ENCODE measurements at regions of chr11 and their contacts with region 1.

Region 1: GRCh38 chr11:16001899-16002426 is 354.4 kb downstream of the SOX6 start:
- DNase-seq: peak; percentile 75
- H3K4me3 Mint-ChIP-seq: peak overlapping the region; percentile 43
- H3K27ac Mint-ChIP-seq: peak overlapping the region; percentile 94
- H3K4me1 Mint-ChIP-seq: peaks cover 38% of the 10 kb centered on the region
- H3K27me3 Mint-ChIP-seq: no peaks in the 10 kb centered on the region
- CTCF ChIP-seq: no peak

Region 2: DNA sequence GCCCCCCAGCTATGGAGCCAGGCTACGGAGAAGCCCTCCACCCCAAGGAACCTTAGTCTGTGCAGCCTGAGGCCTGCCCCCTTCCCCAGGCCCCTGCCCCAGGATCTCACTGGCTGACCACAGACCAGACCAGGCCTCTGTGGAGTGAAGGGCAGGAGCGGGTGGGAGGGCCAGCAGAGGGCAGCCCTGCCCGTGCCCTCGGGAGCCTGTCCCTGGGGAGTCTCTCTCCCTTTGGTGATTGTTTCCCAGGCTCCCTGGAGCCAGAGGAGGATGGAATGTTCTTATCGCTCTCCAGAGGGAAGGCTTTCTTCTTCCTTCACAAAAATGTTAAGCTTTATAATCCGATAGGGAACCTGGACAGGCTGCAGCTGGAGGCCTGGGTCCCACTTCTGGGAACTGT is 100.9 kb before region 1 on chr11:
- CTCF ChIA-PET with region 1: no interaction called
- intact Hi-C with region 1: loop called (anchors 5 kb)
- DNase-seq: peak; percentile 57
- H3K4me3 Mint-ChIP-seq: no peak overlapping the region
- H3K27ac Mint-ChIP-seq: no peak overlapping the region
- H3K4me1 Mint-ChIP-seq: peaks cover 22% of the 10 kb centered on the region
- H3K27me3 Mint-ChIP-seq: no peaks in the 10 kb centered on the region
- CTCF ChIP-seq: peak; percentile 46

Region 3: DNA sequence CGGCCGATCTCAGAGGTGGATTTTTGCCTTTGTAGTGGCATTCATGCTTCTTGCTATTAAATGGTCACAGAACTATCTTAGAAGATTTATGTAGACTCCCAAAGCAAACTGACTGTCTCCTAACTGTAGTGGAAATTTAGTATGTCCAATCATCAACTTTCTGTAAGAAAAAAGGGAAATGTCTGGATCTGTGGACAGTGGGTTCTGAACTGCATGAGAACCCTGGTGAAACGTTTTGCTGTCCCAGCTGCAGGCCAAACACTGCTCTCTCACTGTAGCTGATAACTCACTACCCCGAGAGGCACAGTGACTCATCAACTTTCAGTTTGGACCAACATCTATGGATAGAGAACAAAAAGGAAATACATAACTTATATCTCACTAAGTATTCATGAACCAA is 32.7 kb before region 1 on chr11:
- CTCF ChIA-PET with region 1: interaction called, 4 read pairs
- intact Hi-C with region 1: loop called (anchors 2 kb)
- DNase-seq: peak; percentile 56
- H3K4me3 Mint-ChIP-seq: peak overlapping the region; percentile 58
- H3K27ac Mint-ChIP-seq: peak overlapping the region; percentile 93
- H3K4me1 Mint-ChIP-seq: peaks cover 72% of the 10 kb centered on the region
- H3K27me3 Mint-ChIP-seq: no peaks in the 10 kb centered on the region
- CTCF ChIP-seq: no peak

Region 4: GRCh38 chr11:15981292-15981691 is 20.7 kb before region 1 on chr11:
- CTCF ChIA-PET with region 1: no interaction called
- intact Hi-C with region 1: no loop called
- DNase-seq: no peak
- H3K4me3 Mint-ChIP-seq: no peak overlapping the region
- H3K27ac Mint-ChIP-seq: no peak overlapping the region
- H3K4me1 Mint-ChIP-seq: no peaks in the 10 kb centered on the region
- H3K27me3 Mint-ChIP-seq: no peaks in the 10 kb centered on the region
- CTCF ChIP-seq: no peak

Region 5: GRCh38 chr11:16126362-16126761 is 124.4 kb after region 1 on chr11:
- CTCF ChIA-PET with region 1: no interaction called
- intact Hi-C with region 1: loop called (anchors 5 kb)
- DNase-seq: peak; percentile 21
- H3K4me3 Mint-ChIP-seq: no peak overlapping the region
- H3K27ac Mint-ChIP-seq: peak overlapping the region; percentile 79
- H3K4me1 Mint-ChIP-seq: peaks cover 27% of the 10 kb centered on the region
- H3K27me3 Mint-ChIP-seq: no peaks in the 10 kb centered on the region
- CTCF ChIP-seq: no peak

Region 6: DNA sequence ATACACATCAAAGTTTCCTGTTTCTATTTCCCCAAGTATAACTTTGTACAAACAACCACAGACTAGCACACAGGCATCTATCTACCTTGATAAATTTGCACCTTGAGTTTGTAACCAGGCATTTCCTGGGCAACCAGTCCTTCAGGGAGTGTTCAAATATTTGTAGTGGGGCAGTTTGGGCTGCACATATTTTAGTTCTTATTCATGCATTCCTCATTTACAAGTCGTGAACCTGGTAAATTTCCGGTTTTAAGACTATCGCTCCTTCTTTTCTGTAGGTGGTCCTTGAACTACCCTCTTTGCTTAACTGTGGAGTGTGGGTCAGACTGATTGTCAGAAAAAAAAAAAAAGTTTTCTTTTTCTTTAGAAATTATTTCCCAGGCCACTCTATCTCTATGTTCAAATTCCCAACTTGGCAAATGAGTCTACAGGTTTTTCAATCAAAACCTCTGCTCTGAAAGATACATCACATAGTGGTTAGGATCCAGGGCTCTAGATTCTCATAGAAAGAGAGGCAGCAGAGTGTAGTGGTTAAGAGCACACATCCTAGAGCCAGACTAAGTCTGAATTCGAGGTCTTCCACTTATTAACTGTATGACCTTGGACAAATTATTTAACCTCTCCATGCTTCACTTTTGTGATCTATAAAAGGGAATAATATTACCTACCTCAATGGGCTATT is 152.9 kb after region 1 on chr11:
- CTCF ChIA-PET with region 1: no interaction called
- intact Hi-C with region 1: loop called (anchors 2 kb)
- DNase-seq: peak; percentile 69
- H3K4me3 Mint-ChIP-seq: peak overlapping the region; percentile 4
- H3K27ac Mint-ChIP-seq: no peak overlapping the region
- H3K4me1 Mint-ChIP-seq: peaks cover 12% of the 10 kb centered on the region
- H3K27me3 Mint-ChIP-seq: no peaks in the 10 kb centered on the region
- CTCF ChIP-seq: no peak

Region 7: DNA sequence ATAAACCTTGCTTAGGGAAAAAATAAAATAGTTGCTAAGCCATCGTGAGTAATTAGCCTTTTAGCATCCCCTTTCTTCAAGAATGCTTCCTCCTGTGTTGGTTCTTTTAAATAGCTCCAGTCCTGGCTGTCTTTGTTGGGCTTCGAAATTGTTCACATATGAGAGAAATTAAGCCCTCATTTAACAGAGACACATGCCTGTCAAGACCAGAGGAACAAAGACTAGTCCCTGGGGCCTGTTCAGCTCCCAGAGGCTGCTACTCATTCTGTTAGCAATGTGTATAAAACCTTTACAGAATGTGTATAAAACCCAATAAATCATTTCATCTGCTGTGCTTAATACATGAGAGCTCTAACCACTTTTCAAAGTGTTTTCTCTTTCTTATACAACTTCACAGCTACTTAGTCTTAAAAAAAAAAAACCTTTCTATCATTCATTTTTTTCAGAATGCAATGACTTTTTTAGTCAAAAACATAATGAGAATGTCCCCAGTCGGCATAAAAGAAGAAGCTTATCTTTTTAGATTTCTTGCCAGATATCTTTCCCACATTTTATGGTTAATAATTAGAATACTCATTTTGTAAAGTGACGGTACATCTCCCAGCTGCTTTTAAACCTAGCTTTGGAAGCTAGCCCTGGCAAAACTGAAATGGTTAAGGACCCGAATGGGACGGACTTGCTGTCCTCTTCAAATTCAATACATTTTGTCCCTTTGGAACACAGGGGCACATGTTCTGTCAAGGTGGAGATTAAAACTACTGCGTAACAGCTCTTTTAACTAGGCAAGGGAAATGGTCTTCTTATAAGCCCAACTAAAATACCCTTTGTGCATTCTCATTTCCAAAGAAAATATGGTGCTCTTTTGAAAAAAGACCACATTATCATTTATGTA is 168.2 kb after region 1 on chr11:
- CTCF ChIA-PET with region 1: no interaction called
- intact Hi-C with region 1: loop called (anchors 5 kb)
- DNase-seq: no peak
- H3K4me3 Mint-ChIP-seq: peak overlapping the region; percentile 26
- H3K27ac Mint-ChIP-seq: peak overlapping the region; percentile 74
- H3K4me1 Mint-ChIP-seq: peaks cover 29% of the 10 kb centered on the region
- H3K27me3 Mint-ChIP-seq: no peaks in the 10 kb centered on the region
- CTCF ChIP-seq: no peak

Measured in Calu3 (cell line).